ENCODE measurements at regions of chr19 and their contacts with region 1.

Region 1: GRCh38 chr19:10580979-10581631 is 6.0 kb downstream of the AP1M2 start:
- DNase-seq: peak; percentile 81 to 85
- H3K4me3 ChIP-seq: no peak overlapping the region
- H3K4me3 Mint-ChIP-seq: no peak overlapping the region
- H3K27ac Mint-ChIP-seq: peak overlapping the region; percentile 57
- H3K4me1 ChIP-seq: peaks cover 6% of the 10 kb centered on the region
- H3K4me1 Mint-ChIP-seq: peaks cover 6% of the 10 kb centered on the region
- H3K27me3 ChIP-seq: no peaks in the 10 kb centered on the region
- H3K27me3 Mint-ChIP-seq: no peaks in the 10 kb centered on the region
- CTCF ChIP-seq: peak; percentile 95 to 98

Region 2: DNA sequence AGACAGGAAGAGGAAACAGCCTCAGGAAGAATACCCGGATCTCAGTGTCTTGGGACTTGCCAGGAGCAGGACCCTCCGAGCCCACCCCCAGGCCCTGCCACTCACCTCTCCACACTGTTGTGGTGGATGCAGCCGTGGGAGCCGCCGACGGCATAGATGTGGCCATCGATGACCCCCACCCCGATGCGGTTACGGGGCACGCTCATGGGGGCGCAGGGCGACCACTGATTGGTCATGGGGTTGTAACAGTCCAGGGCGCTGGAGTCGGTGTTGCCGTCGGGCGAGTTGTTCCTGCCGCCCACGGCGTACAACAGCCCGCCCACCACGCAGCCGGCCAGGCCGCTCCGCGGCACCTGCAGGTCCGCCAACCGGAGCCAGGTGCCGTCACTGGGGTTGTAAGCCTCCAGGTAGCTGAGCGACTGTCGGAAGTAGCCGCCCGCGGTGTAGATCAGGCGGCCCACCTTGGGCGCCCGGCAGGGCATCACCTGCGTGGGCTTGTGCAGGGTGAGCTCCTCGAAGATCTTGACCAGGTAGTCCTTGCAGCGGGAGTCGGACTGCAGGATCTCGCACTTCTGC is 89.5 kb before region 1 on chr19:
- CTCF ChIA-PET with region 1: no interaction called
- POLR2A ChIA-PET with region 1: no interaction called
- intact Hi-C with region 1: no loop called
- DNase-seq: no peak
- H3K4me3 ChIP-seq: no peak overlapping the region
- H3K4me3 Mint-ChIP-seq: no peak overlapping the region
- H3K27ac Mint-ChIP-seq: no peak overlapping the region
- H3K4me1 ChIP-seq: no peaks in the 10 kb centered on the region
- H3K4me1 Mint-ChIP-seq: no peaks in the 10 kb centered on the region
- H3K27me3 ChIP-seq: no peaks in the 10 kb centered on the region
- H3K27me3 Mint-ChIP-seq: no peaks in the 10 kb centered on the region
- CTCF ChIP-seq: no peak

Region 3: DNA sequence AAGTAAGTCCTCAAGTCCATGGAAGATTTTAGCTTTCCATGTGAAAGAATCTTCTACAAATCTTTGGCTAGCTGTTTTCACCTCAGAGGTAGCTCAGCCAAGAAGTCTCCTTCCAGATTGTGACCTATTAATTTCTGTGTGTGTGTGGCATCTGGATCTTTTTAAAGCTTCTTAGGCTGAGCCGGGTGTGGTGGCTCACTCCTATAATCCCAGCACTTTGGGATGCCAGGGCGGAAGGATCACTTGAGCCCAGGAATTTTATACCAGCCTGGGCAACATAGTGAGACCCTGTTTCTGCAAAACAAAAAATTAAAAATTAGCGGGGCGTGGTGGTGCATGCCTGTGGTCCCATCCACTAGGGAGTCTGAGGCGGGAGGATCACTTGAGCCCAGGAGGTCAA is 30.8 kb after region 1 on chr19:
- CTCF ChIA-PET with region 1: no interaction called
- POLR2A ChIA-PET with region 1: no interaction called
- intact Hi-C with region 1: no loop called
- DNase-seq: no peak
- H3K4me3 ChIP-seq: no peak overlapping the region
- H3K4me3 Mint-ChIP-seq: no peak overlapping the region
- H3K27ac Mint-ChIP-seq: no peak overlapping the region
- H3K4me1 ChIP-seq: peaks cover 1% of the 10 kb centered on the region
- H3K4me1 Mint-ChIP-seq: no peaks in the 10 kb centered on the region
- H3K27me3 ChIP-seq: no peaks in the 10 kb centered on the region
- H3K27me3 Mint-ChIP-seq: no peaks in the 10 kb centered on the region
- CTCF ChIP-seq: no peak

Region 4: GRCh38 chr19:10625003-10625776 is 44.1 kb after region 1 on chr19 and contains the start of gene SLC44A2:
- CTCF ChIA-PET with region 1: interaction called, 6 read pairs
- POLR2A ChIA-PET with region 1: no interaction called
- intact Hi-C with region 1: loop called (anchors 5 kb)
- DNase-seq: peak; percentile 88 to 93
- H3K4me3 ChIP-seq: peak within 1 kb of the TSS; percentile 85
- H3K4me3 Mint-ChIP-seq: peak within 1 kb of the TSS; percentile 91
- H3K27ac Mint-ChIP-seq: peak within 1 kb of the TSS; percentile 89
- H3K4me1 ChIP-seq: peaks cover 17% of the 10 kb centered on the region
- H3K4me1 Mint-ChIP-seq: no peaks in the 10 kb centered on the region
- H3K27me3 ChIP-seq: no peaks in the 10 kb centered on the region
- H3K27me3 Mint-ChIP-seq: no peaks in the 10 kb centered on the region
- CTCF ChIP-seq: no peak
- total RNA-seq, gene SLC44A2: 119 and 120 TPM in 2 replicates

Region 5: DNA sequence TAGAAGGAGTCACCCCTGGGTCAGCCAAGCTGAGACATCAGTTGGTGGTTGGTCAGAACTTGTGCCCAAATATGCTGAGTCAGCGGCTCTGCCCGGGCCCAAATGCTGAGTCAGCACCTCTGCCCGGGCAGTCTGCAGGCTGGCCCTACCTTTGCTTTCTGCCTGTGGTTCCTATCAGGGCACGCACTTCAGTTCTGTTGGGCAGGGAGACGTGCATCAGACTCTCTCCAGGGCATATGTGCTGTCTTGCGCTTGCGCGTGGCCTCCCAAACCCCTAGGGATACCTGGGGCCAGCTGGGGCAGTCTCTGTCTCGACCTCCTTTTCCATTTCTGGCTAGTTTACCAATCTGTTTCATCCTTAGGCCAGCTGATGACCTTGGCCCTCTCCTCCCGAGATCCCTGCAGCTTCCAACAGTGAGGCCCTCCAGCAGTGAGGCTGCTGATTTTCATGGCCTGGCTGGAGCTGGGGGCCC is 483.8 kb after region 1 on chr19:
- CTCF ChIA-PET with region 1: no interaction called
- POLR2A ChIA-PET with region 1: no interaction called
- intact Hi-C with region 1: no loop called
- DNase-seq: no peak
- H3K4me3 ChIP-seq: no peak overlapping the region
- H3K4me3 Mint-ChIP-seq: no peak overlapping the region
- H3K27ac Mint-ChIP-seq: no peak overlapping the region
- H3K4me1 ChIP-seq: no peaks in the 10 kb centered on the region
- H3K4me1 Mint-ChIP-seq: no peaks in the 10 kb centered on the region
- H3K27me3 ChIP-seq: no peaks in the 10 kb centered on the region
- H3K27me3 Mint-ChIP-seq: peaks cover 2% of the 10 kb centered on the region
- CTCF ChIP-seq: no peak